Calu3 (cell line): ENCODE measurements at regions of chrX and their contacts with region 1.

Region 1: GRCh38 chrX:119516157-119516702 is 48.0 kb downstream of the SLC25A5 start:
- DNase-seq: peak; percentile 28
- H3K4me3 Mint-ChIP-seq: no peak overlapping the region
- H3K27ac Mint-ChIP-seq: no peak overlapping the region
- H3K4me1 Mint-ChIP-seq: no peaks in the 10 kb centered on the region
- H3K27me3 Mint-ChIP-seq: no peaks in the 10 kb centered on the region
- CTCF ChIP-seq: peak; percentile 64

Region 2: GRCh38 chrX:119482481-119483480 is 33.4 kb before region 1 on chrX:
- CTCF ChIA-PET with region 1: interaction called, 32 read pairs
- intact Hi-C with region 1: no loop called
- DNase-seq: peak; percentile 80
- H3K4me3 Mint-ChIP-seq: peak overlapping the region; percentile 61
- H3K27ac Mint-ChIP-seq: no peak overlapping the region
- H3K4me1 Mint-ChIP-seq: peaks cover 7% of the 10 kb centered on the region
- H3K27me3 Mint-ChIP-seq: no peaks in the 10 kb centered on the region
- CTCF ChIP-seq: peak; percentile 48

Region 3: DNA sequence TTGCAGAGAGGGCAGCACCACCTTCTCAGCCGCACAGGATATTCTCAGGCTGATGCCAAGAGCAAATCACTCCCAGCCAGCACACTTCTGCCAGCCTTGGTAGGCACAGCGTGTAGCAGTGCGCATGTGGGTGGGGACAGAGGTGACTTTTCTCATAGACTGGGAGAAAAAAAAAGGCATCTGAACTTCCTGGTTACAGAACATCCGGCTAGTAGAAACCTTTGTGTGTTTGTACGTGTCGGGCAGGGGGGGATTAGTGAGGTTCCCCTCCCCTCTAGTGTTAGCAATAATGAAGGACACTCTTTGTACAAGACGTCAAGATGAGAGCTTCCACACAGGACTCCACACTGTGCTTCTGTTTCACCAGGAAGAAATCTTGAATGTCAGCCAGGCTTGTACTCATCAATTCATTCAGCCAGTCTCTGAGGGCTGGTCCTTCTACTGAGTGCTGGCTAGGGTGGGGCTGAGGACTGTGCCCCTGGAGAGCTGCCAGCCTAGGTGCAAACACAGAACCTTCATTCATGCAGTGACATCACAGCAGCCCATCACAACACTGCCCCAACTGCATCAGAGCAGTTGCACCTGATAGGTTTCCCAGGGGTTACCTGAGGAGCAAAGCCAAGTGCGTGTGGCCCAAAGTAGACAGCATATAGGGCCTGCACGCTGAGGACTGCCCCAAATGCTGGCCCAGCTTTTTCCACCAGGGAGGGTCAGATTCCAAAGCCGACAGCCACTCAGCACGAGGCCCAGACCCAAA is 13.3 kb before region 1 on chrX:
- CTCF ChIA-PET with region 1: interaction called, 32 read pairs
- intact Hi-C with region 1: no loop called
- DNase-seq: peak; percentile 87
- H3K4me3 Mint-ChIP-seq: peak overlapping the region; percentile 59
- H3K27ac Mint-ChIP-seq: peak overlapping the region; percentile 96
- H3K4me1 Mint-ChIP-seq: peaks cover 40% of the 10 kb centered on the region
- H3K27me3 Mint-ChIP-seq: no peaks in the 10 kb centered on the region
- CTCF ChIP-seq: no peak

Region 4: DNA sequence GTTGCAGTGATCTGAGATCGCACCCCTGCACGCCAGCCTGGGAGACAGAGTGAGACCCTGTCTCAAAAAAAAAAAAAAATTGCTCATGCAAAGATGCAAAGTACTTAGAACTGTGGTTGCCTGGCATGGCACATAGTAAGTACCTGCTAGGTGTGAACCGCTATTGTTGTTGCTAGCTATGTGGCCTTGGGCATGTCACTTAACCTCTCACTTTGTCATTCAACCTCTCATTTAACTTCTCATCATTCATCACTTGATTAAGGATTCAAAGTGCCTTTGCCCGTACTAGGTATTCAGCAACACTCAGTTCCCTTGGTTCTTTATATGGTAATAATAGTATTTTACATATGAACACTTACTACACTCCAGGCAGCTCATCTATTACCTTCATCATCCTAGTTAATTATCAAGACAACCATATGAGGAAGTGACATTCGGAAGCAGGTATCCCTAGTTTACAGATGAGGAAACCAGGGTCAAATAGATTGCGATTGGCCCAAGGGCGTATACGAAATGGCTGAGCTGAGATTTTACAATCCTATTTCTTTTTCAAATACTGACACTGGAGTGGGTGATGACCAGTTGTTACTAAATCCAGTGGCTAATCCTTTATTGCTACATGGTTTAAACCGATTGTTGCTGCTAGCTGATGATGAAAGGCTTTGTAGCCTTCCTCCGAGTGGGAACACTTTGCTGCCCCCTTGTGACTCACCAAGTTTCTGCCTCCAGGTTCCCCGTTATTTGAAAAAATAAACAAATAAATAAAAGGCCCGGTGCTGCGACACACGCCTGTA is 213.4 kb after region 1 on chrX:
- CTCF ChIA-PET with region 1: interaction called, 5 read pairs
- intact Hi-C with region 1: loop called (anchors 5 kb)
- DNase-seq: peak; percentile 68
- H3K4me3 Mint-ChIP-seq: no peak overlapping the region
- H3K27ac Mint-ChIP-seq: no peak overlapping the region
- H3K4me1 Mint-ChIP-seq: no peaks in the 10 kb centered on the region
- H3K27me3 Mint-ChIP-seq: peaks cover 24% of the 10 kb centered on the region
- CTCF ChIP-seq: peak; percentile 46

Region 5: DNA sequence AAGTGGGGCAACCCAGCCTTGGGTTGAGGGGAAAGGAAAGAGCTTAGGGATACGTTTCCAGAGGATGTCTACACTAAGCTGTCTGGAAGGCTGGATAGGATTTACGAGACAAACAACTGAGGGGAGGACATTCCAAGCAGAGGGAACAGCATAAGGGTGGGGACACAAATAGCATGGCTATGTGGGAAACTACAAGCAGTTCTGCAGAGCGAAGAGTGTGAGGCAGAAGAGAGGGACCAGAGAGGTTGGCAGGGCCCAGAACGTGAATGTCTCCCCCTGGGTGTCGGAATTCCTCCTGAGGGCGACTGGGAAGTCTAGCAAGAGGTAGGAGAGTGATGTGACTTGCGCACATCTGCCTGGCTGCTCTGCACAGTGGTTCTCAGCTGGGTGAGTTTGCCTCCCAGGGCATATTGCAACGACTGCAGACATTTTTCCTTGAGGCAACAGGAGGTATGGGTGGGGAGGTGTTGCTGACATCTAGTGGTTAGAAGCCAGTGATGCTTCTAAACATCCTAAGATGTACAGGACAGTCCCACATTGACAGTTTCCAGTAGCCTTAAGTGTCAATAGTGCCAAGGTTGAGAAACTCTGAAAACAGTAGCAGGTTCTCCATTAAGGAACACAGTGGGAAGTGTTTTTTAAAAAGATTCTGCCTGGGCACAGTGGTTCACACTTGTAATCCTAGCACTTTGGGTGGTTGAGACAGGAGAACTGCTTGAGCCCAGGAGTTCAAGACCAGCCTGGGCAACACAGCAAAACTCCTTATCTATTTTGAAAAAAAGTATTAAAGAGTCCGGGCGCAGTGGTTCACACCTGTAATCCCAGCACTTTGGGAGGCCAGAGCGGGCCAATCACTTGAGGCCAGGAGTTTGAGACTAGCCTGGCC is 364.6 kb after region 1 on chrX:
- CTCF ChIA-PET with region 1: no interaction called
- intact Hi-C with region 1: loop called (anchors 5 kb)
- DNase-seq: peak; percentile 32
- H3K4me3 Mint-ChIP-seq: no peak overlapping the region
- H3K27ac Mint-ChIP-seq: no peak overlapping the region
- H3K4me1 Mint-ChIP-seq: no peaks in the 10 kb centered on the region
- H3K27me3 Mint-ChIP-seq: no peaks in the 10 kb centered on the region
- CTCF ChIP-seq: no peak